OCI-LY7 (cell line): ENCODE measurements at regions of chr16 and their contacts with region 1.

Region 1: DNA sequence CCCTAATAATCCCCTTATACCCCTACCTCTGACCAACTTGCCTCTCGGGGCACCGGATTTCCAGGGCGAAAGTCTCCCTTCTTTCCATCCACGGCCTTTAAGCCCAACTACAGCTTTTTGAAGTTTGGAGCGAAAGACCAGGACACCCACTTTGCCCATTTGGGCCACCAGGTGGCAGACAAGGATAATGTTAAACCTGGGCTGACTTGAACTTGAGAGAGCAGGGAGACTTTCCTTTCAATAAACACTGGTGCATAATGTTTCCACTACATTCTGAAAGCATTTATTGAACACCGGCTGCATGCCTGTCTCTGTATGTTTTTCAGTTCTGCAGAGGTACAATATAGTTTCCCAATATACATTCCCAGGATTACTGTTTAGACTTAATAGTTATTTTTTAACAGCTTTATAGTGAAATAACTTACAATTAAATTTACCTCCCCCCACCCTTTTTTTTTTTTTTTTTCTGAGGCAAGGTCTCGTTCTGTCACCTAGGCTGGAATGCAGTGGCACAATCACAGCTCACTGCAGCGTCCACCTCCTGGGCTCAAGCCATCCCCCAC is 6.9 kb upstream of the CES3 start:
- DNase-seq: peak; percentile 72
- H3K4me3 ChIP-seq: no peak overlapping the region
- H3K27ac ChIP-seq: no peak overlapping the region
- H3K4me1 ChIP-seq: no peaks in the 10 kb centered on the region
- CTCF ChIP-seq: peak; percentile 95

Region 2: GRCh38 chr16:66728117-66728787 is 225.9 kb before region 1 on chr16:
- CTCF ChIA-PET with region 1: no interaction called
- POLR2A ChIA-PET with region 1: no interaction called
- intact Hi-C with region 1: no loop called
- DNase-seq: peak; percentile 74
- H3K4me3 ChIP-seq: no peak overlapping the region
- H3K27ac ChIP-seq: peak overlapping the region; percentile 0
- H3K4me1 ChIP-seq: no peaks in the 10 kb centered on the region
- CTCF ChIP-seq: peak; percentile 89

Region 3: DNA sequence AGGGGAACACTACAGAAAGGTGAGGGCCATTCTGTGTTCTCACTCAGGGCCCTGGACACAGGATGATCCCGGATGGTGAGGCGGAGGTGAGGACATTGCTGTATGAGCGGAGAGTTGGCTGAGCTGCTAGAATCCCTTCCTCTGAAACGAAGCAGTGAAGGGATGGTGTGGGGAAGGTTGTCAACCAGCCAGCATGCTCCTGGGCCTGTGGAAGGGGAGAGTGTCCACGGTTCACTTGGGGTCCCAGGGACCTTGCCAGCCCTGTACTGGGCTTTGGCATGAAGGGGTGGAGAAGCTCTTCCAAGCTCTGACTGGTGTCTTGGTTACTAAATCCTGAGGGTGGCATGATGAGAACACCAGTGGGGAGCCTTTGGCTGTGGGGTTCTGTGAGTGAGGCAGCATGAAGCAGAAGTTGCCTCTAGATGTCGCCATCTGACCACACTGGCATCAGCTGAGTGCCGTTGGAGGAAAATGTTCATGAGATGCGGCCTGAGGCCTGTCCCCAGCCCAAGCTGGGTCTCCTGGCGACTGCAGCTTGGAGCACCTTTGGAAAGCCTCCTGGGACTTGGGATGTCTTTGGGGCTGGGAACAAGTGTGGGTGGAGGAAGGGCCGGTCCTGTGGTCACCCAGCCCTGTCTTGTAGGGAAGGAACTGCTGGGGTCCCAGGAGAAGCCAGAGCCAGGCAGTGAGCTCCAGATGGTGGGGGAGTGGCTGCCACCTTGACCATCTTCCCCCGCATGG is 59.1 kb before region 1 on chr16:
- CTCF ChIA-PET with region 1: interaction called, 8 read pairs
- POLR2A ChIA-PET with region 1: no interaction called
- intact Hi-C with region 1: loop called (anchors 5 kb)
- DNase-seq: peak; percentile 63
- H3K4me3 ChIP-seq: no peak overlapping the region
- H3K27ac ChIP-seq: no peak overlapping the region
- H3K4me1 ChIP-seq: no peaks in the 10 kb centered on the region
- CTCF ChIP-seq: peak; percentile 90

Region 4: DNA sequence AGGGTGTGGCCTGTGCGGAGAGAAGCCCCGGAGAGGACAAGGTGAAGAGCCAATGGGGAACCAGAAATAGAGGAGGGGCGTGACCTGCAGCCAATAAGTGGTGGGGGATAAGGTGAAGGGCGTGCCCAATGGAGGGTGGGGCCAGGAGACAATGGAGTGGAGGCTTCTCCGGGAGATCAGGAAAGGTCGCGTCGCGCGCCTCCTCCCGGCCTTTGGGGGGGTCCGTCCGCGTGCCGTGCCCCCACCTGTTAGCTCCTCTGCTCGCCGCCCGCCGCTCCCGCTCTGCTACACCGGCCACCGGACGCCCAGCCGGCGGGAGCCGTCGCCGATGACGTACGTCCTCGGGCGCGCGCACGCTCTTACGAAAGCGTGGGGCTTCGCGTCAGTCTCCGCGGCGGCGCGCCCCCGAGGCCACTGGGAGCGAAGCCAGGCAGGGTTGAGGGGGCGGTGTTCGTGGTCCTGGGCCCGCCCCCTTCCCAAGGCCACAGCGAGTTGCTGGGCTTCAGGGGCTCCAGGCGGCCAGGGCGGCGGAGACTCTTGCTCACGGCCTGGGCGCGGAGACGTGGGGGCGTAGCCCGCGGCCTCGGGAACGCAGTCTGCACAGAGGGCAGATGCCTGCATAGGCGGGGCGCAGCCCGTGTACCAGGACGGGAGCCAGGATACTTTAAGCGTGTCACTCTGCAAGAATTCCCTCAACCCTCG is 229.6 kb after region 1 on chr16 and contains the start of gene MATCAP1:
- CTCF ChIA-PET with region 1: no interaction called
- POLR2A ChIA-PET with region 1: no interaction called
- intact Hi-C with region 1: loop called (anchors 1 kb)
- DNase-seq: peak; percentile 97
- H3K4me3 ChIP-seq: peak within 1 kb of the TSS; percentile 79
- H3K27ac ChIP-seq: peak within 1 kb of the TSS; percentile 56
- H3K4me1 ChIP-seq: peaks cover 14% of the 10 kb centered on the region
- CTCF ChIP-seq: no peak
- total RNA-seq, gene MATCAP1: 18.0 and 22.9 TPM in 2 replicates